CD4-positive, alpha-beta memory T cell (primary cell): ENCODE measurements at regions of chr1 and their contacts with region 1.

Region 1: GRCh38 chr1:39091845-39092645 is 65.9 kb downstream of the NDUFS5 start:
- DNase-seq: peak; percentile 48 to 66 (median 58)
- H3K4me3 ChIP-seq: no peak overlapping the region
- H3K4me3 Mint-ChIP-seq: no peak overlapping the region
- H3K27ac ChIP-seq: no peak overlapping the region
- H3K27ac Mint-ChIP-seq: peak overlapping the region in 3 of 7 donors; percentile 4 to 41 (median 31)
- H3K4me1 ChIP-seq: peaks cover 22% of the 10 kb centered on the region
- H3K4me1 Mint-ChIP-seq: peaks cover 9 to 20% (median 14%) of the 10 kb centered on the region in 4 donors
- H3K27me3 ChIP-seq: no peaks in the 10 kb centered on the region
- H3K27me3 Mint-ChIP-seq: peaks cover 0 to 3% of the 10 kb centered on the region in 2 donors

Region 2: DNA sequence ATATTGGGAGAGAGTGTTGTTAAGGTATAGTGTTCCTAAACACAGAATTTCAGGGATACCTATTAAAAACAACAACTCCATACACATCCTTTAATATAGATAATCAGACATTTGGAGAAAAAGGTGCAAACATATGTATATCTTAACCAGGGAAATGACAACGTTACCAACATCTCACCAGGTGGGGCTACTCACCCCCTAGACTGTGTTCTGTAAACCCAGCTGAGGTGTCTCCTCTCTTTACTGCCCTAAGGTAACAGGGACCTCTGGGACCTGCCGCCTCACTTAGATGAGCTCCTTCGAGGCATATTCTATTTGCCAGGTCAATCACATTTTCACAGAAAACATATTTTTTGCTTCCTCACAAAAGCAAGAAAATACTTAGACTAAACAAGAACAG is 245.8 kb before region 1 on chr1:
- CTCF ChIA-PET with region 1: interaction called, 12 read pairs
- POLR2A ChIA-PET with region 1: no interaction called
- intact Hi-C with region 1: loop called (anchors 1 kb)
- DNase-seq: no peak
- H3K4me3 ChIP-seq: no peak overlapping the region
- H3K4me3 Mint-ChIP-seq: no peak overlapping the region
- H3K27ac ChIP-seq: no peak overlapping the region
- H3K27ac Mint-ChIP-seq: peak overlapping the region in 1 of 7 donors; percentile 59
- H3K4me1 ChIP-seq: no peaks in the 10 kb centered on the region
- H3K4me1 Mint-ChIP-seq: peaks cover 10 to 23% (median 15%) of the 10 kb centered on the region in 4 donors
- H3K27me3 ChIP-seq: no peaks in the 10 kb centered on the region
- H3K27me3 Mint-ChIP-seq: no peaks in the 10 kb centered on the region

Region 3: GRCh38 chr1:38859561-38860453 is 232.2 kb before region 1 on chr1 and contains the start of gene RRAGC:
- CTCF ChIA-PET with region 1: interaction called, 6 read pairs
- POLR2A ChIA-PET with region 1: interaction called, 5 read pairs
- intact Hi-C with region 1: loop called (anchors 1 kb)
- DNase-seq: peak; percentile 97 to 99 (median 97)
- H3K4me3 ChIP-seq: peak within 1 kb of the TSS; percentile 70 to 92
- H3K4me3 Mint-ChIP-seq: peak within 1 kb of the TSS; percentile 91 to 97 (median 96)
- H3K27ac ChIP-seq: peak within 1 kb of the TSS; percentile 65
- H3K27ac Mint-ChIP-seq: peak within 1 kb of the TSS; percentile 88 to 98 (median 94)
- H3K4me1 ChIP-seq: peaks cover 35% of the 10 kb centered on the region
- H3K4me1 Mint-ChIP-seq: peaks cover 37 to 77% (median 57%) of the 10 kb centered on the region in 4 donors
- H3K27me3 ChIP-seq: no peaks in the 10 kb centered on the region
- H3K27me3 Mint-ChIP-seq: no peaks in the 10 kb centered on the region
- total RNA-seq, gene RRAGC: 24.5 to 25.2 TPM

Region 4: DNA sequence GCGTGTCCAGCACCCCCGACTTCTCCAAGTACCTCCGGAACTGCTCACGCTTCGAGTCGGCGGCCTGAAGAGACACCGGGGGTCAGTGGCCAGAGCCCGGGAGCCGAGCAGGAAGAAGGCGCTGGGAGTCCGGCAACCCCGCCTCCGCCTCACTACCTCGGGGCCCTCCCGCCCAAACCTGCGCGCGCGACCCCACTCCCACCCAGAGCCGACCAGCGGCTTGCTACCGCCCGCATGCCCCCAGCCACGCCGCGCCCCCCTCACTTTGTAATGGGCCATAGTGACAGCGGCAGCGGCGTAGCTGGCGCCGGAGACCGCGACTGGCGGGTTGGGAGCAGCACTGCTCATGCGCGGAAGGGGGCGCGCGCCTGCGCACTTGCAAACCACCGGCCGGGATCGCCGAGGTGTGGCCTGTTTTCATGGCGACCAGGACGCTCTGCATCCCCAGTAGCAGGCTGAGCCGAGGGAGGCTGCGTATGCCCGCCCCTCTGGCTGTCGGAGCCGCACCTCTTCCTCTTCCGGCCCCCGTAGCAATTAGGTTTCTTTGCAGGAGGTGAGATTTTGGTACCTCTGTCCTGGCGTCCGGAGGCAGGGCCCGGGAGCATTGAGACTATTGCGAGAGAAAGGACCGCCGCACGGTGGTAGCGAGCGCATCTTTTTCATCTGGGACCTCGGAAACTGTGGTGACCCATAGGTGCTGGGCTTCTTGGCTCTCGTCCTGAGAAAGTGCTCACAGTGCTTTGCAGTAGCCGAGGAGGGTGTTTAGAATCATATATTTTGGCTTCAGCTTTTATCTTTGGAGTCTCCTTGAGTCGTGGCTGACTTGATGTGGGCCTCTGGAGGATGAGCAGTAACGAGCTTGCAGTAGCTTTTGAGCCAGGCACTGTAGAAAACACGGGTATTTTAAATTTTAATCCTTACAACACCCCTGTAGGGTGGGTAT is 218.7 kb before region 1 on chr1 and contains the start of gene MYCBP:
- CTCF ChIA-PET with region 1: interaction called, 14 read pairs
- POLR2A ChIA-PET with region 1: interaction called, 3 read pairs
- intact Hi-C with region 1: loop called (anchors 1 kb)
- DNase-seq: peak; percentile 96 to 99 (median 98)
- H3K4me3 ChIP-seq: peak within 1 kb of the TSS; percentile 77 to 81
- H3K4me3 Mint-ChIP-seq: peak within 1 kb of the TSS; percentile 88 to 95 (median 92)
- H3K27ac ChIP-seq: peak within 1 kb of the TSS; percentile 79
- H3K27ac Mint-ChIP-seq: peak within 1 kb of the TSS; percentile 88 to 94 (median 93)
- H3K4me1 ChIP-seq: peaks cover 35% of the 10 kb centered on the region
- H3K4me1 Mint-ChIP-seq: peaks cover 16 to 34% (median 25%) of the 10 kb centered on the region in 4 donors
- H3K27me3 ChIP-seq: no peaks in the 10 kb centered on the region
- H3K27me3 Mint-ChIP-seq: no peaks in the 10 kb centered on the region
- total RNA-seq, gene MYCBP: 13.4 to 15.4 TPM

Region 5: GRCh38 chr1:38891753-38892152 is 200.3 kb before region 1 on chr1:
- CTCF ChIA-PET with region 1: interaction called, 16 read pairs
- POLR2A ChIA-PET with region 1: no interaction called
- intact Hi-C with region 1: no loop called
- DNase-seq: peak in 1 of 5 donors; percentile 13
- H3K4me3 ChIP-seq: no peak overlapping the region
- H3K4me3 Mint-ChIP-seq: no peak overlapping the region
- H3K27ac ChIP-seq: no peak overlapping the region
- H3K27ac Mint-ChIP-seq: no peak overlapping the region
- H3K4me1 ChIP-seq: no peaks in the 10 kb centered on the region
- H3K4me1 Mint-ChIP-seq: no peaks in the 10 kb centered on the region
- H3K27me3 ChIP-seq: no peaks in the 10 kb centered on the region
- H3K27me3 Mint-ChIP-seq: no peaks in the 10 kb centered on the region

Region 6: GRCh38 chr1:38990738-38991639 is 101.1 kb before region 1 on chr1 and contains the start of gene AKIRIN1:
- CTCF ChIA-PET with region 1: interaction called, 7 read pairs
- POLR2A ChIA-PET with region 1: interaction called, 4 read pairs
- intact Hi-C with region 1: loop called (anchors 5 kb)
- DNase-seq: peak; percentile 87 to 95 (median 89)
- H3K4me3 ChIP-seq: peak within 1 kb of the TSS; percentile 52 to 67
- H3K4me3 Mint-ChIP-seq: peak within 1 kb of the TSS; percentile 88 to 94 (median 92)
- H3K27ac ChIP-seq: peak within 1 kb of the TSS; percentile 93
- H3K27ac Mint-ChIP-seq: peak within 1 kb of the TSS; percentile 87 to 93 (median 91)
- H3K4me1 ChIP-seq: peaks cover 47% of the 10 kb centered on the region
- H3K4me1 Mint-ChIP-seq: peaks cover 21 to 52% (median 37%) of the 10 kb centered on the region in 4 donors
- H3K27me3 ChIP-seq: no peaks in the 10 kb centered on the region
- H3K27me3 Mint-ChIP-seq: no peaks in the 10 kb centered on the region
- total RNA-seq, gene AKIRIN1: 79.6 to 84.9 TPM

Region 7: DNA sequence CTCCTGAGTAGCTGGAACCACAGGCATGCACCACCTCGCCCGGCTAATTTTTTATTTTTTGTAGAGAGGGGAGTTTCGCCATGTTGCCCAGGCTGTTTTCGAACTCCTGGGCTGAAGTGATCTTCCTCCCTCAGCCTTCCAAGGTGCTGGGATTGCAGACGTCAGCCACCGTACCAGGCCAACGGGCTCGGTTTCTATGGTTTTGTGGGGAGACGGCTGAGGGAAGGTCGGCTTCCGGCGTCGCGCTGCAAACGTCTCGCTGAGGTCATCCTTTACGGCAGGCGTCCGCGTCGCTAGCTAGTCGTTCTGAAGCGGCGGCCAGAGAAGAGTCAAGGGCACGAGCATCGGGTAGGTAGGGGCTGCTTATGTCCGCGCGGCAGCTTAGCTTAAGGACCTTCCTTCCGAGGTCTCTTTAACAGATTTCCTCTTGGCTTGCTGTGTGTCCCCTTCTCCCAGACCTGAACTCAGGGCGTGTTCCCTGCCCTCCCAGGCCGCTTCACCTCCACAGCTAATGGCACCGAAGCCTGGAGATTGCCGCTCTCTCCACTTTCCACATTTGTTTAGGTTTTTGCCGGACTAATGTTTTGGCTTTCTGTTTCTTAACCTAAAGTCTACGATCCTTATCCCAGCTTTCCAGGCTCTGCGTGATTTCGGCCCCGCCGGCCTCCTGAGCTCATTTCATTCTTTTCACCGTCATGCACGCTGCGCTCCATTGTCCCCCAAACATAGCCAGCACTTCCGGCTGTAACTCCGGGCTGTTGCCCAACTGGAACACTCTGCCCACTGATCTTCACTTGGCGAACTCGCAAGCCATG is 65.8 kb before region 1 on chr1 and contains the start of gene NDUFS5:
- CTCF ChIA-PET with region 1: no interaction called
- POLR2A ChIA-PET with region 1: no interaction called
- intact Hi-C with region 1: no loop called
- DNase-seq: peak; percentile 80 to 87 (median 83)
- H3K4me3 ChIP-seq: peak within 1 kb of the TSS; percentile 88 to 93
- H3K4me3 Mint-ChIP-seq: peak within 1 kb of the TSS; percentile 94 to 100 (median 97)
- H3K27ac ChIP-seq: peak within 1 kb of the TSS; percentile 86
- H3K27ac Mint-ChIP-seq: peak within 1 kb of the TSS; percentile 95 to 99 (median 97)
- H3K4me1 ChIP-seq: peaks cover 23% of the 10 kb centered on the region
- H3K4me1 Mint-ChIP-seq: peaks cover 18 to 43% (median 31%) of the 10 kb centered on the region in 4 donors
- H3K27me3 ChIP-seq: no peaks in the 10 kb centered on the region
- H3K27me3 Mint-ChIP-seq: no peaks in the 10 kb centered on the region
- total RNA-seq, gene NDUFS5: 122 to 125 TPM